WTC11 (cell line): ENCODE measurements at regions of chr10 and their contacts with region 1.

Region 1: GRCh38 chr10:131900350-131901146 is at the start of gene PPP2R2D:
- DNase-seq: peak; percentile 96
- ATAC-seq: peak; percentile 96
- H3K4me3 Mint-ChIP-seq: peak within 1 kb of the TSS; percentile 91
- H3K27ac Mint-ChIP-seq: peak within 1 kb of the TSS; percentile 88
- H3K4me1 Mint-ChIP-seq: peaks cover 33% of the 10 kb centered on the region
- H3K27me3 Mint-ChIP-seq: peaks cover 10% of the 10 kb centered on the region
- CTCF ChIP-seq: no peak
- total RNA-seq, gene PPP2R2D: 28.7 to 33.2 TPM (median 30.0 TPM) in 3 replicates

Region 2: DNA sequence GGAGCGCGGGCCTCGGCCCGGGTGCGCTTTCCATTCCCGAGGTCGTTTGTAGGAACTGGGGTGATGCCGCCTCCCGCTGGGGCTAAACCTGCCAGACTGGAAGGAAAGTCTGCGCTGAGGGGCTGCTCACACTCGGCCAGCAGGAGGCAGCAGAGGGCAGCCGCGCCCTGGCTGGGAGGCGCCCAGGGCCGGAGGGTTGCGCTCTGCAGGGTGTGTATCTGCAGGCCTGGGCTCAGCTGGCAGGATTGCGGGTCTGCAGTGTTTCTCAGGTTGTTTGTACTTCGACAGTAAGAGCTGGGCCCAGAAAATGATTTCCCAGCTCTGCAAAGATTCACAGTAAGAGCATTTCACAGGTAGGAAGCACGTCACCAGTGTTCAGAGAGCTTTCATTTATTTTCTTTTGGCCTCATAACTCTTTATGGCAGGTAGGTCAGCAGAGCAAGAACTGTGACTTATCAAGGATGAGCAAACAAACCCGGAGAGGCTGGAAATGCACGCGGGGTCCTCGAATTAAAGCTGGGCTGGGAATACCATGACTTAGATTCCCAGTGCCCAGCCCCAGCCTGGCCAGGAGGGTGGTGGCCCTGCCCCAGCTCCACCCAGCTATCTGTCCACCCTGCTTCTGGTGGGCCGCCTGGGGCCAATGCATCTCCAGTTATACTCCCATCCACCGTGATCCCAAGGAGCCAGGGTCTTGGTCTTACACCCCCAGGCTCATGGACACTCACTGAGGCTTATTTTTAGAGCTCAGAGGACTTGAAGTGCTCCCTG is 15.0 kb before region 1 on chr10:
- CTCF ChIA-PET with region 1: interaction called, 14 read pairs
- POLR2A ChIA-PET with region 1: interaction called, 4 read pairs
- DNase-seq: peak; percentile 88
- ATAC-seq: peak; percentile 99
- H3K4me3 Mint-ChIP-seq: no peak overlapping the region
- H3K27ac Mint-ChIP-seq: no peak overlapping the region
- H3K4me1 Mint-ChIP-seq: peaks cover 7% of the 10 kb centered on the region
- H3K27me3 Mint-ChIP-seq: no peaks in the 10 kb centered on the region
- CTCF ChIP-seq: peak; percentile 78

Region 3: DNA sequence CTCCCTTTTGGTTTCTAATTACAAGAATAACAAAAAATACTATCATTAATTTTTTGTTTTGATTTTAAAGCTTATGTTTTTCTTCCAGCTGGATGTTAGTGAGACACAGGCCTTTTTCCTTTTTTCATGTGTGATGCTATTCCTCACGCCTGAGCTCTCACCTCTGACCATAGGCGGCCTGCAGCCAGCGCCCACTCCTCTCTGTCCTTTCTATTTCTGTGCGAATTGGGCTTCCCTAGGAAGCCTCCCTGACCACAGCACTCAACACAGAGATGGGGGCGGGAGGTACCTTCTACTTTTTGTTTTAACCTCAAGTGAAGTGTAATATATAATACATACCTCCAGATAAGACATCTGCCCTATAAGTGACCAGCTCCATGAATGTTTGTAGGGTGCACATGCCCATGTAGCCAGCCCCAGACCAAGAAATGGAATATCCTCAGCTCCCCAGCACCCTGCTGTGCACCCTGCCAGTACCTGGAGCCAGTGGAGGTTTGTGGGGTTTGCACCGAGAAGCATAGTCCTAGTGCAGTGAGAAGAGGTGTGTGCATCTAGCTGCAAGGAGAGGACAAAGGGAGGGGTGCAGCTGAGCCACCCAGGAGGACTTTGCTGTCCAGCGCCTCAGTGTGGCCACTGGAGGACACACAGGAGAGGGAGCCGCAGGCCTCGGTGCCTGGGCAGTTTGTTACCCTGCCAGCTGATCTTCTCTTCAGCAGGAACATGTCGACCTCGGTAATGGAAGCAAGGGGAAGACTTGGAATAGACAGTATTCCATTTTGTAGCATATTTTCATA is 42.7 kb after region 1 on chr10:
- CTCF ChIA-PET with region 1: interaction called, 10 read pairs
- POLR2A ChIA-PET with region 1: interaction called, 3 read pairs
- DNase-seq: peak; percentile 72
- ATAC-seq: peak; percentile 96
- H3K4me3 Mint-ChIP-seq: no peak overlapping the region
- H3K27ac Mint-ChIP-seq: 0 out of 2 replicates have a peak overlapping the region, but pooled peaks have one; percentile 29
- H3K4me1 Mint-ChIP-seq: no peaks in the 10 kb centered on the region
- H3K27me3 Mint-ChIP-seq: no peaks in the 10 kb centered on the region
- CTCF ChIP-seq: no peak; the same call in 1 of the 2 replicates

Region 4: GRCh38 chr10:132142411-132143161 is 242.0 kb after region 1 on chr10:
- CTCF ChIA-PET with region 1: interaction called, 11 read pairs
- POLR2A ChIA-PET with region 1: no interaction called
- DNase-seq: peak; percentile 75
- ATAC-seq: peak; percentile 80
- H3K4me3 Mint-ChIP-seq: no peak overlapping the region
- H3K27ac Mint-ChIP-seq: no peak overlapping the region
- H3K4me1 Mint-ChIP-seq: peaks cover 7% of the 10 kb centered on the region
- H3K27me3 Mint-ChIP-seq: no peaks in the 10 kb centered on the region
- CTCF ChIP-seq: peak; percentile 94